A549 (cell line): ENCODE measurements at regions of chr16 and their contacts with region 1.

Region 1: GRCh38 chr16:57628008-57628781 is at the start of gene ADGRG1:
- DNase-seq: peak; percentile 93 to 95
- ATAC-seq: peak; percentile 80 to 85
- H3K4me3 ChIP-seq: peak within 1 kb of the TSS; percentile 44
- H3K27ac ChIP-seq: peak within 1 kb of the TSS; percentile 91 to 98
- H3K4me1 ChIP-seq: peaks cover 94% of the 10 kb centered on the region
- CTCF ChIP-seq: no peak; the same call in 2 of the 3 replicates
- EP300 ChIP-seq: peak; percentile 17 to 28; a peak in 2 of 5 replicates
- POLR2A ChIP-seq: peak; percentile 54
- RAD21 ChIP-seq: peak; percentile 11 to 23; a peak in 1 of 5 replicates
- polyA plus RNA-seq, gene ADGRG1: 28.3 and 37.7 TPM in 2 replicates

Region 2: GRCh38 chr16:56673921-56674320 is 954.3 kb before region 1 on chr16:
- CTCF ChIA-PET with region 1: no interaction called
- POLR2A ChIA-PET with region 1: no interaction called
- DNase-seq: peak in 1 of 2 experiments; percentile 54
- ATAC-seq: peak; percentile 73 to 89; a peak in 5 of 6 replicates
- H3K4me3 ChIP-seq: no peak overlapping the region
- H3K27ac ChIP-seq: no peak overlapping the region
- H3K4me1 ChIP-seq: no peaks in the 10 kb centered on the region
- CTCF ChIP-seq: peak; percentile 53
- EP300 ChIP-seq: no peak
- POLR2A ChIP-seq: no peak
- RAD21 ChIP-seq: peak; percentile 70 to 77

Region 3: GRCh38 chr16:57600048-57600835 is 28.0 kb before region 1 on chr16:
- CTCF ChIA-PET with region 1: interaction called, 227 read pairs
- POLR2A ChIA-PET with region 1: no interaction called
- DNase-seq: peak; percentile 68 to 81
- ATAC-seq: peak; percentile 97 to 99
- H3K4me3 ChIP-seq: no peak overlapping the region
- H3K27ac ChIP-seq: peak overlapping the region; percentile 65 to 79
- H3K4me1 ChIP-seq: peaks cover 21% of the 10 kb centered on the region
- CTCF ChIP-seq: peak; percentile 82
- EP300 ChIP-seq: no peak
- POLR2A ChIP-seq: no peak
- RAD21 ChIP-seq: peak; percentile 89 to 90

Region 4: DNA sequence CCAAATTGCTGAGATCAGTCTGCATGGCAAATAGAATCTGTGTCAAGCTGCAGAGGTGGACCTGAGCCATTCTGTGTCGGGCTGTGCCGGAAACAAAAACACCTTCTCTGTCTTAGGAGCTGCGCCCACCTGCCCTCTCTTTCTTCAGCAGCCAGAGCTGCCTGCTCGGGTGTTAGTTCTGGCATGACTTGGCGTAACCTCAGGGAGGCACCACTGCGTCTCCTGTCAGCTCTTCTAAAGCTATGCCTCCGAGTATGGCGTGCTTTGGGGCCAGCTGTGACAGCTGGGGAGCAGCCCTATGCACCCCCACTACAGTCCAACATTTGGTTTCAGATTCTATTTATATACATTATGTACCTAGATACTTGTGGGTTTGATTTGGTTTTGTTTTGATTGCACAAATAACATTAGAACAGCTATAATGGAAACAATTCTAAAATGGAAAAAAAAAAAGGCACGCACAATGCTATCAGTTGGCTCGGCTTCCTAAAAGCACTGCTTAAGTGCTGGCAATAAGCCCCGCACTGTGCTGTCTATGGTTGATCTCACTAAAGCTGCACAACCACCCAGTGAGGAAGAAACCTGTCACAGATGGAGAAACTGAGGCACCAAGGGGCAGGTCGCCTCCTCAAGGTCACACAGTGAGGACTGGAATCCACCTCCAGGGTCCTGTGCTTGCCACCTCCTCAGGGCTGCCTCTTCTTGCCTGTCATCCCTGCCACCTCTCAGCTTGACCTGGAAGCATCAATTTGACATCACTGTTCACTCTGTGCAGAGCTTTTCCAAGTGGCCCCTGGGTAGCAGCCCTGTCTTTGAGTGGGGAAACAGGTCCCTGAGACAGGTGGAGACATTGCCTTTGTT is 18.4 kb before region 1 on chr16:
- CTCF ChIA-PET with region 1: interaction called, 13 read pairs
- POLR2A ChIA-PET with region 1: interaction called, 3 read pairs
- DNase-seq: no peak
- ATAC-seq: peak in 1 of 2 experiments; percentile 21; a peak in 3 of 6 replicates
- H3K4me3 ChIP-seq: no peak overlapping the region
- H3K27ac ChIP-seq: peak overlapping the region; percentile 69 to 74
- H3K4me1 ChIP-seq: peaks cover 71% of the 10 kb centered on the region
- CTCF ChIP-seq: no peak
- EP300 ChIP-seq: no peak
- POLR2A ChIP-seq: no peak
- RAD21 ChIP-seq: peak in 1 of 2 experiments; percentile 10; a peak in 1 of 5 replicates

Region 5: GRCh38 chr16:57639172-57639887 is 11.1 kb after region 1 on chr16:
- CTCF ChIA-PET with region 1: interaction called, 39 read pairs
- POLR2A ChIA-PET with region 1: interaction called, 7 read pairs
- DNase-seq: no peak
- ATAC-seq: no peak
- H3K4me3 ChIP-seq: no peak overlapping the region
- H3K27ac ChIP-seq: peak overlapping the region in 1 of 2 experiments; percentile 52; a peak in 2 of 6 replicates
- H3K4me1 ChIP-seq: peaks cover 51% of the 10 kb centered on the region
- CTCF ChIP-seq: no peak
- EP300 ChIP-seq: no peak
- POLR2A ChIP-seq: no peak
- RAD21 ChIP-seq: no peak

Region 6: GRCh38 chr16:57834936-57835335 is 206.7 kb after region 1 on chr16:
- CTCF ChIA-PET with region 1: no interaction called
- POLR2A ChIA-PET with region 1: no interaction called
- DNase-seq: peak; percentile 54 to 64
- ATAC-seq: peak; percentile 77 to 84; a peak in 5 of 6 replicates
- H3K4me3 ChIP-seq: no peak overlapping the region
- H3K27ac ChIP-seq: peak overlapping the region; percentile 13 to 84
- H3K4me1 ChIP-seq: peaks cover 38% of the 10 kb centered on the region
- CTCF ChIP-seq: no peak
- EP300 ChIP-seq: no peak
- POLR2A ChIP-seq: no peak
- RAD21 ChIP-seq: no peak